Ovary (tissue), 10 donors: ENCODE measurements at regions of chr6 and their contacts with region 1.

Region 1: GRCh38 chr6:152669895-152670294 is 27.8 kb upstream of the MYCT1 start:
- DNase-seq: no peak
- H3K4me3 ChIP-seq: no peak overlapping the region
- H3K27ac ChIP-seq: no peak overlapping the region
- H3K4me1 ChIP-seq: no peaks in the 10 kb centered on the region
- H3K27me3 ChIP-seq: no peaks in the 10 kb centered on the region
- CTCF ChIP-seq: peak; percentile 18 to 70 (median 43)
- EP300 ChIP-seq: no peak
- POLR2A ChIP-seq: no peak

Region 2: DNA sequence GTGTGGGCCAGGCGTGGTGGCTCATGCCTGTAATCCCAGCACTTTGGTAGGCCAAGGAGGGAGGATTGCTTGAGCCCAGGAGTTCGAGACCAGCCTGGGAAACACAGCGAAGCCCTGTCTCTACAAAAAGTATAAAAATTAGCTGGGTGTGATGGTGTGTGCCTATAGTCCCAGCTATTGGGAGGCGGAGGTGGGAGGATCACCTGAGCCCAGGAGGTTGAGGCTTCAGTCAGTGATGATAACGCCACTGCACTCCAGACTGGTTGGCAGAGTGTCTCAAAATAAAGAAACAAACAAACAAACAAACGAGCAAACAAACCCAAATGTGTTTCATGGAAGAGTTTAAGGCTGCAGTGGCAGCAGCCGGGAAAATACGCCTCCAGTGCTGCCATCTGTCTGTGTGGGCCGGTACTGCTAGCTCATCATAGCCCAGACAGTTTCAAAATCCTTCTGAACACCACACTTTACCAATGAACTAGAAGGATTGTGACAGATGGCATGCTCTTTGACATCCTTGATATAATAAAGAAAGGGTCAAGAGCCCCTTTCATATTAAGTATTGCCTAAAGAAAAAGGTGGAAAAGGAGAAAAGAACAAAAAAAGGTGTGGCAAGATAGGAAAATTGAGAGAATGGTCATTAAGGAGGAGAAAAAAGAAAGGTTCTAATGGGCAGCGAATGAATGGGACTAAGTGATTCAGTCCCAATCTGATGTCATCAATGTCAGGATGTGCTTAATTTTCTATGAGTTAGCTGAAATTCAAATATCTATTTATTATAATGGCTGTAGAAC is 331.4 kb before region 1 on chr6:
- intact Hi-C with region 1: no loop called
- DNase-seq: peak; percentile 39 to 77 (median 69)
- H3K4me3 ChIP-seq: no peak overlapping the region
- H3K27ac ChIP-seq: no peak overlapping the region
- H3K4me1 ChIP-seq: peaks cover 1% of the 10 kb centered on the region
- H3K27me3 ChIP-seq: no peaks in the 10 kb centered on the region
- CTCF ChIP-seq: peak; percentile 66 to 89 (median 71)
- EP300 ChIP-seq: no peak
- POLR2A ChIP-seq: no peak

Region 3: GRCh38 chr6:152484806-152485205 is 185.1 kb before region 1 on chr6:
- intact Hi-C with region 1: loop called in 1 of 4 experiments (anchors 10 kb)
- DNase-seq: no peak
- H3K4me3 ChIP-seq: no peak overlapping the region
- H3K27ac ChIP-seq: no peak overlapping the region
- H3K4me1 ChIP-seq: no peaks in the 10 kb centered on the region
- H3K27me3 ChIP-seq: no peaks in the 10 kb centered on the region
- CTCF ChIP-seq: no peak
- EP300 ChIP-seq: no peak
- POLR2A ChIP-seq: no peak